Right cardiac atrium (tissue), 5 donors: ENCODE measurements at regions of chr10 and their contacts with region 1.

Region 1: GRCh38 chr10:31928549-31929260 is at the start of gene ARHGAP12:
- DNase-seq: peak; percentile 91 to 98 (median 97)
- ATAC-seq: peak; percentile 98
- H3K4me3 ChIP-seq: peak within 1 kb of the TSS; percentile 89
- H3K27ac ChIP-seq: peak within 1 kb of the TSS; percentile 97
- H3K4me1 ChIP-seq: peaks cover 3% of the 10 kb centered on the region
- H3K27me3 ChIP-seq: no peaks in the 10 kb centered on the region
- total RNA-seq, gene ARHGAP12: 21.5 to 25.5 (median 25.0) TPM

Region 2: DNA sequence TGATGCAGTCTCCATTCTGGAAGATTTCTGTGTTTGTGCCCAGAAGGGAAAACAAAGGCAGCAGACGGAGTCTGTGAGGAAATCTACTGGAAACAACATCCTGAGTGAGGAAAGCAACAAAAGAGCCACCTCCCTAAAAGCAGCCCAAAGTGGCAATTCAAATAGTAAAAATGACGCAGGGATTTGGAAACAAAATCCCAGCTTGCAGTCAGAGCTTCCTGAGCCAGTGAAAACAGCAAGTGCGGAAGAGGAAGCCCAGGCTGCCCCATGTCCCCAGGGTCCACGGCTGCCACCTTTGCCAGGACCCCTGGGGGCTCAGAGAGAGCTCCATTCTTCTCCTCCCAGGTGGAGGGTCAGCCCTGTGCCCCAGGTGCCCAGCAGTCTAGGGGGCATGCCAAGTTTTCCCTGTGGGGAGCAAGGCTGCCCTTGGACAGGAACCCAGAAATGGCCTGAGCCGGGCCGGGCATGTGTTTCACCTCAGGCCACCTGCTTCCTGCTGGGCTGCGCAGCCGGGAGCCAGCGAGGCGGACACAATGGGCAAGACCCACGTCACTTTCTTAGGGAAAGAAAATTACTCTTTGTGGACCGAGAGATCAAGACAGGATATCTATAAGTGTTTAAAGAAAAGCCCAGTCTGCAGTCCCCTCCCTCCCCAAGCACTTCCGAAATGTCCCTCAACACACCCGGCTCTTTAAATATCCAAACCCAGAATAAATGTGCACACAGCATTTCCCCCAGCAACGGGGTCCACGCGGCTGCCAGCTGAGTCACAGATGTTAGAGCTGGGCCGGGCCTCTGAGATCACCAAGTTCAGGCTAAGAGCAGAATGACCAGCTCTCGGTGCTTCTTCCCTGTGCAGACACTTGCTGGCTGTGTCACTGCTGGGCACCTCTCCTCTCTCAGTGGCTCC is 231.2 kb before region 1 on chr10:
- intact Hi-C with region 1: no loop called
- DNase-seq: peak; percentile 94 to 96 (median 94)
- ATAC-seq: peak; percentile 84 to 92
- H3K4me3 ChIP-seq: no peak overlapping the region
- H3K27ac ChIP-seq: peak overlapping the region; percentile 96
- H3K4me1 ChIP-seq: peaks cover 18% of the 10 kb centered on the region
- H3K27me3 ChIP-seq: no peaks in the 10 kb centered on the region

Region 3: GRCh38 chr10:31875608-31876007 is 53.1 kb before region 1 on chr10:
- intact Hi-C with region 1: loop called in 1 of 4 experiments (anchors 10 kb)
- DNase-seq: no peak
- ATAC-seq: no peak
- H3K4me3 ChIP-seq: no peak overlapping the region
- H3K27ac ChIP-seq: no peak overlapping the region
- H3K4me1 ChIP-seq: peaks cover 2% of the 10 kb centered on the region
- H3K27me3 ChIP-seq: no peaks in the 10 kb centered on the region

Region 4: DNA sequence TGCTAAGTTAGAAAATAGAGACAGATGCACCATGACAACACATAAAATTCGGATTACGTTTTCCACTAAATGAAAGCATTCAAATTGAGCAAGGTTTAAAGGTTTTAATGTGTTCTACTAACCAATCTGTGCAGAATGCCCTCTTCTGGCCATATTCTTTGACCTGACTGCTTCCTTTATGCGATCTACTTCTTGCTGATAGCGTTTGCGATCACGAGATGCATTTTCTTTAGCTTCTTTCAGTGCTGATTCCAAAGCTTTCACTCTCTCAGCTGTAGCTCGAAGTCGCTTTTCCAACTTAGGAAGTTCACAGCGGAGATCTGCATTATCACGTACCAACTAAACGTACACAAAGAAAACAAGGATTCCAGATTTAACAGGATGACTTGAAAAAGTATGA is 88.3 kb after region 1 on chr10:
- intact Hi-C with region 1: no loop called
- DNase-seq: no peak
- ATAC-seq: no peak
- H3K4me3 ChIP-seq: no peak overlapping the region
- H3K27ac ChIP-seq: no peak overlapping the region
- H3K4me1 ChIP-seq: no peaks in the 10 kb centered on the region
- H3K27me3 ChIP-seq: no peaks in the 10 kb centered on the region